Caco-2 (cell line): ENCODE measurements at regions of chr5 and their contacts with region 1.

Region 1: GRCh38 chr5:106601620-106602019 is 1069.1 kb downstream of the EFNA5 start:
- DNase-seq: peak in 1 of 2 experiments; percentile 28
- H3K4me3 ChIP-seq: no peak overlapping the region
- H3K4me3 Mint-ChIP-seq: no peak overlapping the region
- H3K27ac Mint-ChIP-seq: no peak overlapping the region
- H3K4me1 ChIP-seq: no peaks in the 10 kb centered on the region
- H3K4me1 Mint-ChIP-seq: no peaks in the 10 kb centered on the region
- H3K27me3 ChIP-seq: no peaks in the 10 kb centered on the region
- H3K27me3 Mint-ChIP-seq: no peaks in the 10 kb centered on the region
- CTCF ChIP-seq: no peak

Region 2: GRCh38 chr5:106616934-106617333 is 15.3 kb after region 1 on chr5:
- CTCF ChIA-PET with region 1: no interaction called
- POLR2A ChIA-PET with region 1: no interaction called
- intact Hi-C with region 1: loop called (anchors 1 kb)
- DNase-seq: no peak
- H3K4me3 ChIP-seq: no peak overlapping the region
- H3K4me3 Mint-ChIP-seq: no peak overlapping the region
- H3K27ac Mint-ChIP-seq: no peak overlapping the region
- H3K4me1 ChIP-seq: peaks cover 15% of the 10 kb centered on the region
- H3K4me1 Mint-ChIP-seq: no peaks in the 10 kb centered on the region
- H3K27me3 ChIP-seq: no peaks in the 10 kb centered on the region
- H3K27me3 Mint-ChIP-seq: no peaks in the 10 kb centered on the region
- CTCF ChIP-seq: no peak